A549 (cell line): ENCODE measurements at regions of chr14 and their contacts with region 1.

Region 1: DNA sequence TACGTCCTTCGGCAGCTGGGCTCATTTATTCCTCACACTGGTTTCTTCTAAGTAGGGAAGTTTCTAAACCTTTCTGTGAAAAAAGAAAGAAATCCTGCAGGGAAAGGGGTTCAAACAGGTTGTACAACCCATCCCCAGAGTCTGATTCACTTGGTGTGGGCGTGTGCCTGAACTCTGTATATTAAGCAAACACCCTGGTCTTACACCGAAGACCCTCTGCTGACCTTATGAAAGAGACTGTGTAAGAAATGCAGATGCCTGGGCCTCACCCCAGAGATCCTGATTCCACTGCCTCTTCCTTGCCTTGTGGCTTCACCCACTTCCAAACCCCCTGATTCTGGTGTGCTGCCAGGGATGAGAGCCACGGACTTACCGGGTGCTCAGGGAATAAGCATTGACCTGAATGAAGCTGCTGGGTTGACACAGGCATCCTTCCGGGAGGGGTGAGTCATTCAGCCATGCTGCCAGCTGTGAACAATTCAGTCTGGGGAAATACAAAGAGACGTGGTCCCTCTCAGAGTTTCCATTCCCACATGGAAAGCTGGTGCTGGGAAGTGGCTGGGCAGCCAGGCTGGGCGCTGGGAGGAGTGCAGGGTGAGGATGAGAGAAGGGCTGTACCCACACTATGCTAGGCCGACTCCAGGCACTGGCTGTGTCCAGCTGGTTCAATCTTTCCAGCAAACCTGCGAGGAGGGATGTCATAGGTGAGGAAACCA is 26.5 kb upstream of the ACTN1 start:
- DNase-seq: peak; percentile 70 to 86
- ATAC-seq: peak; percentile 84 to 92
- H3K4me3 ChIP-seq: no peak overlapping the region
- H3K27ac ChIP-seq: peak overlapping the region; percentile 14 to 67; a peak in 4 of 6 replicates
- H3K4me1 ChIP-seq: peaks cover 26% of the 10 kb centered on the region
- CTCF ChIP-seq: no peak
- EP300 ChIP-seq: no peak
- POLR2A ChIP-seq: no peak
- RAD21 ChIP-seq: 0 out of 5 replicates have a peak, but pooled peaks of 1 of the 2 experiments have one; percentile 23

Region 2: GRCh38 chr14:68987653-68988036 is 17.9 kb before region 1 on chr14:
- CTCF ChIA-PET with region 1: interaction called, 48 read pairs
- POLR2A ChIA-PET with region 1: no interaction called
- DNase-seq: peak; percentile 25 to 42
- ATAC-seq: peak in 1 of 2 experiments; percentile 88; a peak in 3 of 6 replicates
- H3K4me3 ChIP-seq: no peak overlapping the region
- H3K27ac ChIP-seq: peak overlapping the region; percentile 29 to 65; a peak in 4 of 6 replicates
- H3K4me1 ChIP-seq: peaks cover 12% of the 10 kb centered on the region; the same call in 2 of the 3 replicates
- CTCF ChIP-seq: no peak
- EP300 ChIP-seq: no peak
- POLR2A ChIP-seq: no peak
- RAD21 ChIP-seq: no peak